ENCODE measurements at regions of chr16 and their contacts with region 1.

Region 1: GRCh38 chr16:87847785-87848675 is 21.3 kb downstream of the SLC7A5 start:
- DNase-seq: peak in 9 of 10 donors; percentile 57 to 80 (median 72)
- H3K4me3 ChIP-seq: peak overlapping the region in 43 of 59 donors; percentile 1 to 54 (median 28)
- H3K27ac ChIP-seq: peak overlapping the region in 54 of 59 donors; percentile 1 to 84 (median 61)
- H3K27me3 ChIP-seq: peaks cover 0 to 3% (median 0%) of the 10 kb centered on the region in 45 donors
- CTCF ChIP-seq: peak in 30 of 56 donors; percentile 6 to 59 (median 22)

Region 2: DNA sequence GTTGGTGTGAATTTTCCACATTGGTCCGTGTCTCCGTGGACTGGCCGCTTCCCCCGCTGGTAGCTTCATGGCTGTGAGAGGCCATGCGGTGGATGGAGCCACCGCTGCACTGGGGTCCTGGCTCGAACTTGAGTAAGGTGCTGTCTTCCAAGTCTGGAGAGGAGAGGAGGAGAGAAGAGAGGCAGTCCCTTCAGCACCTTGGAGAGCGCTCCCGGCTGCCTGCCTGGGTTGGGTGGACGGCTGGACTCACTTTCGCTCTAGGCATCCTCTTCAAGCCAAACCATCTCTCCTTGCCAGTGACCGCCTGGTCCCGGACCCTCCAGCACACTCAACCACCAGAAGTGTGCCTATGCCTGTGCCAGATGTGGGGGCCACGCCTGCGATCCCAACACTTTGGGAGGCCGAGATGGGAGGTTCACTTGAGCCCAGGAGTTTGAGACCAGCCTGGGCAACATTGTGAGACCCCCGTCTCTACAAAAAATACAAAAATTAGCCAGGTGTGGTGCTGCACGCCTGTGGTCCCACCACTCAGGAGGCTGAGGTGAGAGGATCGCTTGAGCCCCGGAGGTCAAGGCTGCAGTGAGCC is 239.5 kb before region 1 on chr16:
- intact Hi-C with region 1: no loop called
- DNase-seq: no peak
- H3K4me3 ChIP-seq: peak overlapping the region in 31 of 59 donors; percentile 2 to 73 (median 63)
- H3K27ac ChIP-seq: peak overlapping the region in 7 of 59 donors; percentile 1 to 69 (median 29)
- H3K27me3 ChIP-seq: peaks cover 0 to 31% (median 17%) of the 10 kb centered on the region in 45 donors
- CTCF ChIP-seq: no peak

Region 3: GRCh38 chr16:87778830-87779579 is 69.0 kb before region 1 on chr16:
- intact Hi-C with region 1: loop called in 1 of 2 experiments (anchors 2 kb)
- DNase-seq: peak; percentile 83 to 92 (median 90)
- H3K4me3 ChIP-seq: peak overlapping the region in 16 of 59 donors; percentile 11 to 51 (median 26)
- H3K27ac ChIP-seq: peak overlapping the region in 51 of 59 donors; percentile 5 to 89 (median 58)
- H3K27me3 ChIP-seq: peaks cover 0 to 6% (median 0%) of the 10 kb centered on the region in 45 donors
- CTCF ChIP-seq: peak; percentile 88 to 100 (median 99)

Region 4: GRCh38 chr16:88045820-88046303 is 197.8 kb after region 1 on chr16:
- intact Hi-C with region 1: no loop called
- DNase-seq: peak in 3 of 10 donors; percentile 34 to 55 (median 43)
- H3K4me3 ChIP-seq: no peak overlapping the region
- H3K27ac ChIP-seq: no peak overlapping the region
- H3K27me3 ChIP-seq: no peaks in the 10 kb centered on the region
- CTCF ChIP-seq: no peak

Measured in dorsolateral prefrontal cortex (tissue), 120 donors.